ENCODE measurements at regions of chr7 and their contacts with region 1.

Region 1: GRCh38 chr7:82810558-82811259 is 352.0 kb downstream of the PCLO start:
- DNase-seq: no peak
- ATAC-seq: peak; percentile 93
- H3K4me3 Mint-ChIP-seq: no peak overlapping the region
- H3K27ac Mint-ChIP-seq: no peak overlapping the region
- H3K4me1 Mint-ChIP-seq: peaks cover 12% of the 10 kb centered on the region
- H3K27me3 Mint-ChIP-seq: no peaks in the 10 kb centered on the region
- CTCF ChIP-seq: 0 out of 2 replicates have a peak, but pooled peaks have one; percentile 36

Region 2: DNA sequence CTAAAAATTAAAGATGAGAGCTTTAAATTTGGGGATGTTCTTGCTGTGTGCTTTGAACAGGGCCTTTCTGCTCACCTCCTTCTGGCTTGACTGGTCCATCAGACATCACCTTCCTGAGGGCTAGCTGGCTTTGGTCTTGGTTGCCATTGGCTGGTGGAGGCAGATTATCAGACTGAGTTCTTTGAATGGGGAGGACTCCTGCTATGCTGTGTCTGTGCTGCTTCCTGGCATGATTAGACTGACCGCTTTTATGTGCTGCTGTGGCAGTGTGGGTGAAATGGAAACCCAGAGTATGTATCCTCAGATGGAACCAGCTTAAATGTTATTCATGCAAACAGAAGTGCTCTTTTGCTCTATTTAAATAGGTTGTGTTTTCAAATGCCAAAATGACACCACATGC is 10.3 kb after region 1 on chr7:
- CTCF ChIA-PET with region 1: interaction called, 11 read pairs
- POLR2A ChIA-PET with region 1: no interaction called
- DNase-seq: no peak
- ATAC-seq: peak; percentile 72
- H3K4me3 Mint-ChIP-seq: no peak overlapping the region
- H3K27ac Mint-ChIP-seq: no peak overlapping the region; the same call in 1 of the 2 replicates
- H3K4me1 Mint-ChIP-seq: peaks cover 59% of the 10 kb centered on the region
- H3K27me3 Mint-ChIP-seq: no peaks in the 10 kb centered on the region
- CTCF ChIP-seq: no peak

Measured in WTC11 (cell line).